MCF 10A (cell line): ENCODE measurements at regions of chr19 and their contacts with region 1.

Region 1: DNA sequence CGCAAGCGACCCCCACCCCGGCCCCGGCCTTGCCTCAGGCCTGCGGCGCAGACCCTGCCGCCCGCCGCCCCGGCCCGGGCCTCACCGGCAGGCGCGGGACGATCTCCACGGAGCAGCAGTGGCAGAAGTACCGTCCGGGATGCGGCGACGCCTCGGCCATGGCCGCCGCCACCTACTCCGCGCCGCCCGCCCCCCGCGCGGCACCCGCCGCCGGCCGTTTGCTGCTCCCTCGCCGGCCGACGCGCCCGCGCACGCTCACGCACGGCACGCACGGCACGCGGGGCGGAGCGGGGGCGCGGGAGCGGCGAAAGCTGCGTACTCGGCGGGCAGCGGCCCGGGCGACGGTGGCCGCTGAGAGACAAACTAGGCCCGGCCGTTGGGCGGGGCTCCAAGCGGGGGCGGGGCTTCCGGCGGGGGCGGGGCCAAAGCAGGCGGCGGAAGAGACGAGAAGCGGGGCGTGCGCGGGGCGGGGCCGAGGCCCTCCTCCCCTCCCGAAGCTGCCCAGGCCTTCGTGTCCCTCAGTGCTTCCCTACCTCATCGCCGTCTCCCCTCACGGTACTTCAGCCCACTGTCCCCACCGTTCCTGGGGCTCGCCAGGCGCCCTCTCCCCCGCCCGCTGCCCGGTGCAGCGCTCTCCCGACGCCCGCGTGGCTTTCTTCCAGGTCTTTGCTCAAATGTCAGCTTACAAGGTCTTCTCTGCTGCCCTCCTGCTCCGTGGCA is at the start of gene RNF126:
- DNase-seq: peak; percentile 90
- H3K4me3 Mint-ChIP-seq: peak within 1 kb of the TSS; percentile 87
- H3K27ac Mint-ChIP-seq: peak within 1 kb of the TSS; percentile 88
- H3K4me1 Mint-ChIP-seq: peaks cover 31% of the 10 kb centered on the region
- H3K27me3 Mint-ChIP-seq: no peaks in the 10 kb centered on the region
- CTCF ChIP-seq: no peak
- total RNA-seq, gene RNF126: 53.9 and 68.0 TPM in 2 replicates

Region 2: DNA sequence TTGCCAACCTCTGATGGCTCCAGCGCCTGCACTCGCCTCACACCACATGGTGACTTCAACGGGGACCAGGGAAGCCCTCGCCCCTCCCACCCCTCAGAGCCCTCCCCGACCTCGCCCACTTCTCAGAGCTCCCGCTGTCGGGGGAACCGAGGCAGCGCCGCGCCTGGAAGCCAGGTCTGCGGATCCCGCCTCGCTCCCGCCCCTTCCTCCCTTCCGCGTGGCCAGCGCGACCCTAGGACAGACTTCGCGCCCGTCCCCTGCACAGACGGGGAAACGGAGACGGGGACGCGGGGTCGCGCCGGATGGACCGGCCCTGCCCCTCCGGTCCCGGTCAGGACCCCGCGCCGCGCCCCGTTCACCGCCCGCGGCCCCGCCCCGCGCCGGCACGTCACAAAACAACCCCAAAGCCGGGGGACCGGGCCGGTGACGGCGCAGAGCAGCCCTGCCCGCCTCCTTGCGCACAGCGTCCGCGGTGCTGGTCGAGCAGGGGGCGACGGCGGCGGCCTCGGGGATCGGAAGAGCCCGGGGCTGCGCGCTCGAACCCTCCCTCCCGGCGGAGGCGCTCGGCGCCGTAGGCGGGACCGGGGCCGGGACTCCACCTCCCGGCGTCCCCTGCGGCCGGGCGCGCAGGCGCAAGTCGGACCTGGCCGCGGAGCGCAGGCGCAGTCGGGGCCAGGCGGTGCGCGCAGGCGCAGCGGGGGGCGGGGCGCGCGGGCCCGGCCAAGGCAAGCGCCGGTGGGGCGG is 131.9 kb before region 1 on chr19:
- CTCF ChIA-PET with region 1: no interaction called
- POLR2A ChIA-PET with region 1: interaction called, 9 read pairs
- intact Hi-C with region 1: loop called (anchors 2 kb)
- DNase-seq: peak; percentile 83
- H3K4me3 Mint-ChIP-seq: peak overlapping the region; percentile 74
- H3K27ac Mint-ChIP-seq: no peak overlapping the region
- H3K4me1 Mint-ChIP-seq: peaks cover 4% of the 10 kb centered on the region
- H3K27me3 Mint-ChIP-seq: no peaks in the 10 kb centered on the region
- CTCF ChIP-seq: no peak

Region 3: DNA sequence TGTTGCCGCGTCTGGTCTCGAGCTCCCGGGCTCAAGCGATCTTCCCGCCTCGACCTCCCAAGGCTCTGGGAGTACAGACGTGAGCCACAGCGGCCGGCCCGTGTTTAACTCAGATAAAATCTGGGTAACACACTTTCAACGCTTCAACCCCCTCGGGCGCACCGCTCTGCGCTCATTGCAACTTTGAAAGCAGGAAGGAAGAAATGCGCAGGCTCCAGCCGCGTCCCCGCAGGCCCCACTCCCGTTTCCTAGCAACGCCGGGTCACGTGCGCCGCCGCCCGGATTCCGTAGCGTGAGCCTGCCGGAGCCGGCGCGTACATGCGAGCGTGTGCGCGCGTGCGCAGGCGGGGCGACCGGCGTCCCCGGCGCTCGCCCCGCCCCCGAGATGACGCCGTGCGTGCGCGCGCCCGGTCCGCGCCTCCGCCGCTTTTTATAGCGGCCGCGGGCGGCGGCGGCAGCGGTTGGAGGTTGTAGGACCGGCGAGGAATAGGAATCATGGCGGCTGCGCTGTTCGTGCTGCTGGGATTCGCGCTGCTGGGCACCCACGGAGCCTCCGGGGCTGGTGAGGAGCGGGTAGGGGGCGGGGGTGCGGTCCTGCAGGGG is 90.9 kb before region 1 on chr19 and contains the start of gene BSG:
- CTCF ChIA-PET with region 1: no interaction called
- POLR2A ChIA-PET with region 1: interaction called, 17 read pairs
- intact Hi-C with region 1: no loop called
- DNase-seq: peak; percentile 98
- H3K4me3 Mint-ChIP-seq: peak within 1 kb of the TSS; percentile 85
- H3K27ac Mint-ChIP-seq: peak within 1 kb of the TSS; percentile 96
- H3K4me1 Mint-ChIP-seq: peaks cover 23% of the 10 kb centered on the region
- H3K27me3 Mint-ChIP-seq: no peaks in the 10 kb centered on the region
- CTCF ChIP-seq: no peak
- total RNA-seq, gene BSG: 550 and 557 TPM in 2 replicates

Region 4: GRCh38 chr19:588093-588740 is 74.9 kb before region 1 on chr19:
- CTCF ChIA-PET with region 1: no interaction called
- POLR2A ChIA-PET with region 1: interaction called, 5 read pairs
- intact Hi-C with region 1: loop called (anchors 5 kb)
- DNase-seq: peak; percentile 94
- H3K4me3 Mint-ChIP-seq: no peak overlapping the region
- H3K27ac Mint-ChIP-seq: no peak overlapping the region
- H3K4me1 Mint-ChIP-seq: no peaks in the 10 kb centered on the region
- H3K27me3 Mint-ChIP-seq: no peaks in the 10 kb centered on the region
- CTCF ChIP-seq: peak; percentile 67

Region 5: GRCh38 chr19:633068-633785 is 29.9 kb before region 1 on chr19 and contains the start of gene POLRMT:
- CTCF ChIA-PET with region 1: interaction called, 3 read pairs
- POLR2A ChIA-PET with region 1: interaction called, 9 read pairs
- intact Hi-C with region 1: loop called (anchors 2 kb)
- DNase-seq: peak; percentile 99
- H3K4me3 Mint-ChIP-seq: peak within 1 kb of the TSS; percentile 84
- H3K27ac Mint-ChIP-seq: peak within 1 kb of the TSS; percentile 84
- H3K4me1 Mint-ChIP-seq: peaks cover 3% of the 10 kb centered on the region
- H3K27me3 Mint-ChIP-seq: no peaks in the 10 kb centered on the region
- CTCF ChIP-seq: no peak
- total RNA-seq, gene POLRMT: 36.9 and 40.9 TPM in 2 replicates

Region 6: DNA sequence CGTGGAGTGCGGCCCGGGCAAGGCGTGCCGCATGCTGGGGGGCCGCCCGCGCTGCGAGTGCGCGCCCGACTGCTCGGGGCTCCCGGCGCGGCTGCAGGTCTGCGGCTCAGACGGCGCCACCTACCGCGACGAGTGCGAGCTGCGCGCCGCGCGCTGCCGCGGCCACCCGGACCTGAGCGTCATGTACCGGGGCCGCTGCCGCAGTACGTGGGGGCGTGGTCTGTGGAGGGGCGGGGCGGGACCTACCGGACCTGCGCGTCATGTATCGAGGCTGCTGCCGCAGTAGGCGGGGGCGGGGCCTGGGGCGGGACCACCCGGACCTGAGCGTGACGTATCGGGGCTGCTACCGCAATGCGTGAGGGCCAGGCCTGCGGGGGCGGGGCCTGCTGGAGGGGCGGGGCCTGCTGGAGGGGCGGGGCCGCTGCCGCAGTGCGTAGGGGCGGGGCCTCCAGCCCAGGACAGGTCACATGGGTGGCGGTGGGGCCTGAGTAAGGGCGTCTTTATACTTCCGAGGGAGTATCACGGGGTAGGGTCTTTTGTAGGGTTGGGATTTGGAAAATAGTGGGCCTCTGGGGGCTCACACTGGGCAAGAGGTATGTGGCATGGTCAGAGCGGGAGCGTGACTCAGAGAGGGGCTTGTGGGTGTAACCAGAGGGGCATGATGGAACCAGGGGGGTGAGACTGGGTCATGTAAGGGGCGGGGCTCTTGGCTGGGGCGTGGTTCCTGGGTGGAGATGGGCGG is 17.3 kb after region 1 on chr19:
- CTCF ChIA-PET with region 1: interaction called, 7 read pairs
- POLR2A ChIA-PET with region 1: interaction called, 49 read pairs
- intact Hi-C with region 1: no loop called
- DNase-seq: peak; percentile 97
- H3K4me3 Mint-ChIP-seq: peak overlapping the region; percentile 65
- H3K27ac Mint-ChIP-seq: peak overlapping the region; percentile 63
- H3K4me1 Mint-ChIP-seq: peaks cover 9% of the 10 kb centered on the region
- H3K27me3 Mint-ChIP-seq: no peaks in the 10 kb centered on the region
- CTCF ChIP-seq: peak; percentile 45

Region 7: GRCh38 chr19:732148-733069 is 69.3 kb after region 1 on chr19:
- CTCF ChIA-PET with region 1: interaction called, 7 read pairs
- POLR2A ChIA-PET with region 1: interaction called, 6 read pairs
- intact Hi-C with region 1: loop called (anchors 1 kb)
- DNase-seq: no peak
- H3K4me3 Mint-ChIP-seq: no peak overlapping the region
- H3K27ac Mint-ChIP-seq: no peak overlapping the region
- H3K4me1 Mint-ChIP-seq: peaks cover 5% of the 10 kb centered on the region
- H3K27me3 Mint-ChIP-seq: no peaks in the 10 kb centered on the region
- CTCF ChIP-seq: no peak